Activated naive CD4-positive, alpha-beta T cell treated with anti-CD3 and anti-CD28 coated beads for 36 hours (primary cell): ENCODE measurements at regions of chr2 and their contacts with region 1.

Region 1: GRCh38 chr2:218360447-218360846 is 3.8 kb downstream of the CATIP start:
- DNase-seq: no peak
- H3K4me3 Mint-ChIP-seq: no peak overlapping the region
- H3K27ac Mint-ChIP-seq: no peak overlapping the region
- H3K4me1 Mint-ChIP-seq: no peaks in the 10 kb centered on the region
- H3K27me3 Mint-ChIP-seq: no peaks in the 10 kb centered on the region

Region 2: DNA sequence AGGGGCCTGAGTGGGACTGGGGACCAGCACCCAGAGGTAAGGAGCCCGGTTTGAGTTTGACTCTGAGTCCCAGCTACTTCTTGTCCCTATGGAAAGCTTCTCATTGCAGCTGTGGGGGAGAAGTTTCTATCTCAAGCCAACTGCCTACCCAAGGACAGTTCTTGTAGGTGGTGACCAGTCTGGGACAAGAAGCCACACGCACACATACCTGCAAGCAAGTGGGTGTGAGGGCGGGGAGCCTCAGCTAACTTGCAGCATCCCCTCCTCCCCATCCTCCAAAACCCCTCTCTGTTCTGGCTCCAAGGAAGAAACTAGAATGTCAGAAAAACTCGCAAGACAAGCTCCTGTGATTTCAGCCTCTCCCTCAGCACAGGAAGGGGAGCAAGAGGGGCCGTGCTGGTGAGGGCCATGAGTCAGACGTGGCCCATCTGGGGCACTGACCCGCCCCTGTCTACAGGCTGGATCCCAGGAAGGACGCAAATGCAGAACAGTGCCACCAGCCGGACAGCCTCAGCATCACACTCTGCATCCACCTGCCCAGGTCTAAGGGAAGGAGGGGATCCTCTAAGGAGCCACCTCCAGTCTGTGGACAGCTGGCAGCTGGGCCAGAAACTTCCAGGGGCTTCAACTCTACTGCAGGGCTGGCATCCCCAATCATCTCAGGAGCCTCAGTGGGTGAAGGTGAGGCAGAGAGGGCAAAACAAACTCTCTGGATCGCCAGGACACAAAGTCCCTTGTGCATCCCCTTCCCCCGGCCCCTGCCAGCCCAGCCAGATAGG is 461.0 kb before region 1 on chr2:
- CTCF ChIA-PET with region 1: no interaction called
- intact Hi-C with region 1: no loop called
- DNase-seq: no peak
- H3K4me3 Mint-ChIP-seq: no peak overlapping the region
- H3K27ac Mint-ChIP-seq: no peak overlapping the region
- H3K4me1 Mint-ChIP-seq: no peaks in the 10 kb centered on the region
- H3K27me3 Mint-ChIP-seq: peaks cover 2% of the 10 kb centered on the region

Region 3: DNA sequence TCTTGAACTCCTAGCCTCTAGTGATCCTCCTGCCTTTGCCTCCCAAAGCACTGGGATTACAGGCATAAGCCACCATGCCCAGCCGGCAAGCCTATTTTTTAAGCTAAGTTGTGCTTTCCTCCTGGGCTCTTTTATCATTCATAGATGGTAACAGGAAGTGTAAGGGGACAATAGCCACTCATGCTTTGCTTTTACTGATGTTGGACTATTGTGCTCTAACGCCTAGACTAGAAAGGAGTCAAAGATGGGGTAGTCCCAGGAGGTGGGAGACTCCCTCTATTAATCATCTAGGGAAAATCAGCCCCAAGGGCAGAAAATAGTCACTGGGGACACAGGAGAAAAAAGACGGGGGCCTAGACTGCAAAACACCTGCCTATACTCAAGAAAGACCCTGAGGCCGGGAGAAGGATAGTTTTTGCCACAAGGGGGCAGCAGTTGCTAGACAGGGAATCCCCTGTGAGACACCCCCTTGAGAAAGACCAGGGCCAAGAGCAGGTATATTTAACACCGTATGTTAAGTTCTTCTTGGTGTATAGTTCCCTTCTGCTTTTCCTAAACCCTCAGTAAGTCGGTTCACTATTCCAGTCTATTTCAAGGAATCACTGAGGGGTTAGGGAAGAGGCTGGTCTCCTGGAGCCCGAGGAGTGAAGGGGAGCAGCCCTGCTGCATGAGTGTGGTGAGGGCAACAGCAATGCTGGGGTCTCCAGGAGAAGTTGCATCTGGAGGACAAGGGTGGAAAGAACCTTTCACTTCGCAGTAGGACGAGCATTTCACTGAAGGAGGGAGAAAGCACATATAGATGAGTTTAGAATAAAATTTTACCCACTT is 191.6 kb before region 1 on chr2:
- CTCF ChIA-PET with region 1: no interaction called
- intact Hi-C with region 1: loop called (anchors 5 kb)
- DNase-seq: peak; percentile 79
- H3K4me3 Mint-ChIP-seq: no peak overlapping the region
- H3K27ac Mint-ChIP-seq: no peak overlapping the region
- H3K4me1 Mint-ChIP-seq: peaks cover 26% of the 10 kb centered on the region
- H3K27me3 Mint-ChIP-seq: no peaks in the 10 kb centered on the region

Region 4: DNA sequence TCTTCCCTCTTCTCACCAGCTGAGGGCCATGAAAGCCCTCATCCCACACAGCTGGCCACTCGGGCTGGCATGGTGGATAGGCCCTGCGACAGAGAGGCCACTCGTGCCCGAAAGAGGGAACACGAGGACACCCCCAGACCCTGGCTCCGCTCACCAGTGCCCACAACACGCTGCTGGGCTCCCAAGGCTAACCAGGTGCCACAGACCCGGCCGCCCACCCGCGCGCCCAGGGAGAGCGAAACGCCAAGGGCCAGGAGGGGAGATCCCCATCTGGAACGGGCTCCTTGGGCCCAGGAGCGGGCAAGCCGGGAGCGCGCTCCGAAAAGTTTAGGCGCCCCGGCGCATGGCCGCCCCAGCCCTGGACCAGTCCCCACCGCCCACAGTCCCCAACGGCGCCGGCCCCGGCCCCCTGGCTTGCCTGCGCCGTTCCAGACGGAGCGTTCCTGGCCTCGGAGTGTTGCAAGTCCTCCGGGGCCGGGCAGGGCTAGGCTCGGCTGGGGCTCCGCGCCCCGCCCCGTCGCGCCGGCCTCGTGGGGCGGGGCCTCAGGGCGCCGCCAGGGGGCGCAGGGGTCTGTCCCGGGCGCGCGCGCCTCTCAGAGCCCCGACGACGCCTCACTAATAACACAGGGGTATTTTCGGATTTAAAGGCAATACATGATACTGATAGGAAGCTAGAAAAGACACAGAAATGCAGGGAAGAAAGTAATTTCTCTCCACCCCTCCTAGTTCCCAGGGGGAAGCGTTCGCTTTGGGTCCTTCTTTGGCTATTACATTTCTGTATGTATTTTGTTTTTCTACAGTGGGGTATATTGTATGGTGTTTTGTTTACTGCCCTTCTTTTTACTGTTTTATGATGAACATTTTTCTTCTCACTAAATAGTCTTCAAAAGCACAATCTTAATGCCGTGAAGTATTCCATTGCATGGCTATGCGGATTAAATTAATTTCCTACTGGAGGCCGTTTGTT is 68.1 kb before region 1 on chr2 and contains the start of gene TMBIM1:
- CTCF ChIA-PET with region 1: interaction called, 32 read pairs
- intact Hi-C with region 1: loop called (anchors 5 kb)
- DNase-seq: peak; percentile 75
- H3K4me3 Mint-ChIP-seq: peak within 1 kb of the TSS; percentile 78
- H3K27ac Mint-ChIP-seq: peak within 1 kb of the TSS; percentile 94
- H3K4me1 Mint-ChIP-seq: peaks cover 46% of the 10 kb centered on the region
- H3K27me3 Mint-ChIP-seq: no peaks in the 10 kb centered on the region
- total RNA-seq, gene TMBIM1: 43.1 to 43.4 TPM

Region 5: GRCh38 chr2:218301176-218301819 is 59.1 kb before region 1 on chr2:
- CTCF ChIA-PET with region 1: interaction called, 62 read pairs
- intact Hi-C with region 1: loop called (anchors 1 kb)
- DNase-seq: peak; percentile 97
- H3K4me3 Mint-ChIP-seq: no peak overlapping the region
- H3K27ac Mint-ChIP-seq: no peak overlapping the region
- H3K4me1 Mint-ChIP-seq: peaks cover 5% of the 10 kb centered on the region
- H3K27me3 Mint-ChIP-seq: no peaks in the 10 kb centered on the region